Activated naive CD4-positive, alpha-beta T cell treated with anti-CD3 and anti-CD28 coated beads for 36 hours (primary cell): ENCODE measurements at regions of chr13 and their contacts with region 1.

Region 1: GRCh38 chr13:52011632-52012511 is at the start of gene ALG11:
- DNase-seq: peak; percentile 100
- H3K4me3 Mint-ChIP-seq: peak within 1 kb of the TSS; percentile 98
- H3K27ac Mint-ChIP-seq: peak within 1 kb of the TSS; percentile 85
- H3K4me1 Mint-ChIP-seq: peaks cover 14% of the 10 kb centered on the region
- H3K27me3 Mint-ChIP-seq: peaks cover 10% of the 10 kb centered on the region
- total RNA-seq, gene ALG11: 12.6 to 15.6 TPM

Region 2: GRCh38 chr13:51895906-51896888 is 115.7 kb before region 1 on chr13:
- CTCF ChIA-PET with region 1: interaction called, 5 read pairs
- intact Hi-C with region 1: loop called (anchors 5 kb)
- DNase-seq: peak; percentile 69
- H3K4me3 Mint-ChIP-seq: no peak overlapping the region
- H3K27ac Mint-ChIP-seq: no peak overlapping the region
- H3K4me1 Mint-ChIP-seq: no peaks in the 10 kb centered on the region
- H3K27me3 Mint-ChIP-seq: peaks cover 2% of the 10 kb centered on the region